ENCODE measurements at regions of chr19 and their contacts with region 1.

Region 1: DNA sequence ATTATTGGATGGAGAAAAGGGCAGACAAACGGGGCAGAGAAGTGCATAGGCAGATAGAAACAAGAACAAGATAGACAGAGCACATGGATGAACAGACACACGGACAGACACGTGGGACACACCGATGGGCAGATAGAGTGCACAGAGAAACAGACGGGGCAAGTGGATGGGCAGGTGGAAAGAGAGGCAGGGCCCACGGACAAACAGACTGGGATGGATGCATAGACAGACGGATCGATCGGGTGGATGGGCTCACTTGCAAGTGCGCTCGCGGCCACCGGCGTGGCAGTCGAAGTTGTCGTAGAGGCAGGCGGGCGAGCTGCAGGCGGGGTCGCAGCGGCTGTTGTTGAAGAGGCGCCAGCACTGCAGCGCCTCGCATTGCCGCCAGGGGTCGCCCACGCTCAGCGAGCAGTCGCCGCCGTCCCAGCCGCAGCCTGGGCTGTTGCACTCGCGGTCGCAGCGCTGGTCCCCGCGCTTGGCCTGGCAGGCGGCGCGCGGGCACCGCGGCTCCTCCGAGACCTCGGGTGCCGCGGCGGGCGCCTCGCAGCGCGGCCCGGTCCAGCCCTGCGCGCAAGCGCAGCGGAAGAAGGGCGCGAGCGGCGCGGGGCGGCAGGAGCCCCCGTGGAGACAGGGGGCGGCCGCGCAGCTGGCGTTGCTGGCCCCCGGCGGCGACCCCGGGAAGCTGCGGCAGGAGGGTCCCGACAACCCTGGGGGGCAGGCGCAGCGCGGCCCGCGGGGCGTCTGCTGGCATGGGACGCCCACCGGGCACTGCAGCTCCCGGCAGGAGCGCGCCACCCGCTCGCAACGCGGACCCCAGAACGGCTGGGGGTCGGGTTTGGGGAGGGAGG is 23.3 kb downstream of the NOTCH3 start:
- DNase-seq: peak; percentile 74 to 91 (median 82)
- ATAC-seq: peak; percentile 98
- H3K4me3 ChIP-seq: no peak overlapping the region
- H3K4me3 Mint-ChIP-seq: peak overlapping the region; percentile 36
- H3K27ac ChIP-seq: no peak overlapping the region
- H3K27ac Mint-ChIP-seq: no peak overlapping the region
- H3K4me1 ChIP-seq: peaks cover 4% of the 10 kb centered on the region
- H3K4me1 Mint-ChIP-seq: peaks cover 4% of the 10 kb centered on the region
- H3K27me3 ChIP-seq: peaks cover 0 to 8% of the 10 kb centered on the region in 2 experiments
- H3K27me3 Mint-ChIP-seq: peaks cover 15% of the 10 kb centered on the region
- CTCF ChIP-seq: peak; percentile 91

Region 2: DNA sequence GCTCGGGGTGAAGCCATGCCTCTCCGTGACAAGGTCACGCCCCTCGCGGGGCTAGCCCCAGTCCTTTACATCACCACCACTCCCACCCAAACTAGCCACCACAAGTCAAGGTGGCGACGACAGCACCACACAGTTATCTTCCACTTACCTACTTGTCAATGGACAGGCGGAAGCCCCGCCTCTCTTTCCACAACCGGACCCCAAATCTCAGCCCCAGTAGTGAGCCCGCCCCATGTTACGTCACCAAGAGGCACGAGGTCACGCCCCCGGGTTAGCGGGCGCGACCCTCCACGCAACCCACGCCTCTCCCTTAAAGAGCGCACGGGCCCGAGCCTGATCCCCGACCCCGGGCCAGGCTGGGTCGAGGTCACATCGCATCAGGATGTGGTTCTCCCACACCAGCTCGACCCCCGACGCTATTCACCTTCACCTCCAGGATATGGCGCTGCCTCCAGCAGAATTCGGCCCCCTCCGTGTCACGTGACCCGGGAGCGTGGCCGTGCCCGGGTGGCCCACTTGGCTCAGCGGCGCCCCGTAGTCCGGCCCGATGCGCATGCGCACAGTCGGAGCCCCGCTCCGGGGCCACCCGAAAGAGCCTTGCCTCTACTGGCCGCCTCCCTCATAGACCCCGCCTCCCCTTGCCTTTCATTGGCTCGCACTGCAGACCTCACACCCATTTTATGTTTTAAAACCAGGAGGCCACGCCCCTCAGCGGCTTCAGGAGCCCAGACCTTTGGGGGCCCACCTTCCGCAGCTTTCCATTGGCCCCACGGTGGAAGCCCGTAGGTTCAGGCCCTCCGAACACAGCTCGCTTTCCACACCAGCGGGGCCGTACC is 52.0 kb before region 1 on chr19:
- CTCF ChIA-PET with region 1: interaction called, 4 read pairs
- POLR2A ChIA-PET with region 1: interaction called, 3 read pairs
- intact Hi-C with region 1: loop called in 1 of 2 experiments (anchors 2 kb)
- DNase-seq: peak; percentile 94 to 99 (median 97)
- ATAC-seq: peak; percentile 85
- H3K4me3 ChIP-seq: peak overlapping the region; percentile 98 to 99
- H3K4me3 Mint-ChIP-seq: peak overlapping the region; percentile 99
- H3K27ac ChIP-seq: peak overlapping the region; percentile 91 to 98
- H3K27ac Mint-ChIP-seq: peak overlapping the region; percentile 98
- H3K4me1 ChIP-seq: peaks cover 34% of the 10 kb centered on the region
- H3K4me1 Mint-ChIP-seq: peaks cover 47% of the 10 kb centered on the region
- H3K27me3 ChIP-seq: no peaks in the 10 kb centered on the region
- H3K27me3 Mint-ChIP-seq: no peaks in the 10 kb centered on the region
- CTCF ChIP-seq: no peak

Region 3: GRCh38 chr19:15166700-15167099 is 10.8 kb before region 1 on chr19:
- CTCF ChIA-PET with region 1: interaction called, 11 read pairs
- POLR2A ChIA-PET with region 1: no interaction called
- intact Hi-C with region 1: no loop called
- DNase-seq: no peak
- ATAC-seq: no peak
- H3K4me3 ChIP-seq: no peak overlapping the region
- H3K4me3 Mint-ChIP-seq: no peak overlapping the region
- H3K27ac ChIP-seq: no peak overlapping the region
- H3K27ac Mint-ChIP-seq: no peak overlapping the region
- H3K4me1 ChIP-seq: no peaks in the 10 kb centered on the region
- H3K4me1 Mint-ChIP-seq: no peaks in the 10 kb centered on the region
- H3K27me3 ChIP-seq: no peaks in the 10 kb centered on the region
- H3K27me3 Mint-ChIP-seq: no peaks in the 10 kb centered on the region
- CTCF ChIP-seq: no peak

Region 4: GRCh38 chr19:15231231-15231630 is 53.7 kb after region 1 on chr19:
- CTCF ChIA-PET with region 1: no interaction called
- POLR2A ChIA-PET with region 1: no interaction called
- intact Hi-C with region 1: loop called in 1 of 2 experiments (anchors 1 kb)
- DNase-seq: no peak
- ATAC-seq: no peak
- H3K4me3 ChIP-seq: no peak overlapping the region
- H3K4me3 Mint-ChIP-seq: peak overlapping the region; percentile 37
- H3K27ac ChIP-seq: no peak overlapping the region
- H3K27ac Mint-ChIP-seq: no peak overlapping the region
- H3K4me1 ChIP-seq: peaks cover 8% of the 10 kb centered on the region
- H3K4me1 Mint-ChIP-seq: peaks cover 11% of the 10 kb centered on the region
- H3K27me3 ChIP-seq: peaks cover 0 to 15% of the 10 kb centered on the region in 2 experiments
- H3K27me3 Mint-ChIP-seq: peaks cover 16% of the 10 kb centered on the region
- CTCF ChIP-seq: no peak

Region 5: GRCh38 chr19:15264061-15264932 is 86.8 kb after region 1 on chr19:
- CTCF ChIA-PET with region 1: interaction called, 3 read pairs
- POLR2A ChIA-PET with region 1: no interaction called
- intact Hi-C with region 1: loop called in 1 of 2 experiments (anchors 5 kb)
- DNase-seq: peak; percentile 46 to 82 (median 72)
- ATAC-seq: peak; percentile 71
- H3K4me3 ChIP-seq: no peak overlapping the region
- H3K4me3 Mint-ChIP-seq: no peak overlapping the region
- H3K27ac ChIP-seq: no peak overlapping the region
- H3K27ac Mint-ChIP-seq: no peak overlapping the region
- H3K4me1 ChIP-seq: no peaks in the 10 kb centered on the region
- H3K4me1 Mint-ChIP-seq: peaks cover 3% of the 10 kb centered on the region
- H3K27me3 ChIP-seq: no peaks in the 10 kb centered on the region
- H3K27me3 Mint-ChIP-seq: no peaks in the 10 kb centered on the region
- CTCF ChIP-seq: peak; percentile 70

Measured in CD8-positive, alpha-beta T cell (primary cell).